Mammary epithelial cell (primary cell): ENCODE measurements at regions of chr9 and their contacts with region 1.

Region 1: GRCh38 chr9:69376651-69377050 is 51.6 kb downstream of the ENTREP1 start:
- DNase-seq: peak; percentile 83
- H3K4me3 ChIP-seq: no peak overlapping the region
- H3K27ac ChIP-seq: no peak overlapping the region
- H3K4me1 ChIP-seq: peaks cover 46% of the 10 kb centered on the region
- H3K27me3 ChIP-seq: no peaks in the 10 kb centered on the region
- CTCF ChIP-seq: no peak

Region 2: GRCh38 chr9:69476016-69476415 is 99.4 kb after region 1 on chr9:
- CTCF ChIA-PET with region 1: no interaction called
- dilution Hi-C with region 1: loop called (anchors 25 kb)
- in situ Hi-C with region 1: no loop called
- intact Hi-C with region 1: no loop called
- DNase-seq: no peak
- H3K4me3 ChIP-seq: no peak overlapping the region
- H3K27ac ChIP-seq: no peak overlapping the region
- H3K4me1 ChIP-seq: no peaks in the 10 kb centered on the region
- H3K27me3 ChIP-seq: peaks cover 2% of the 10 kb centered on the region
- CTCF ChIP-seq: no peak